ENCODE measurements at regions of chr20 and their contacts with region 1.

Region 1: GRCh38 chr20:51162015-51162414 is 139.1 kb upstream of the KCNG1 start:
- DNase-seq: peak in 1 of 2 experiments; percentile 25
- H3K4me3 ChIP-seq: no peak overlapping the region
- H3K4me3 Mint-ChIP-seq: no peak overlapping the region
- H3K27ac Mint-ChIP-seq: no peak overlapping the region
- H3K4me1 ChIP-seq: peaks cover 4% of the 10 kb centered on the region; the same call in 1 of the 2 replicates
- H3K4me1 Mint-ChIP-seq: no peaks in the 10 kb centered on the region
- H3K27me3 ChIP-seq: peaks cover 3% of the 10 kb centered on the region
- H3K27me3 Mint-ChIP-seq: peaks cover 19% of the 10 kb centered on the region
- CTCF ChIP-seq: no peak

Region 2: DNA sequence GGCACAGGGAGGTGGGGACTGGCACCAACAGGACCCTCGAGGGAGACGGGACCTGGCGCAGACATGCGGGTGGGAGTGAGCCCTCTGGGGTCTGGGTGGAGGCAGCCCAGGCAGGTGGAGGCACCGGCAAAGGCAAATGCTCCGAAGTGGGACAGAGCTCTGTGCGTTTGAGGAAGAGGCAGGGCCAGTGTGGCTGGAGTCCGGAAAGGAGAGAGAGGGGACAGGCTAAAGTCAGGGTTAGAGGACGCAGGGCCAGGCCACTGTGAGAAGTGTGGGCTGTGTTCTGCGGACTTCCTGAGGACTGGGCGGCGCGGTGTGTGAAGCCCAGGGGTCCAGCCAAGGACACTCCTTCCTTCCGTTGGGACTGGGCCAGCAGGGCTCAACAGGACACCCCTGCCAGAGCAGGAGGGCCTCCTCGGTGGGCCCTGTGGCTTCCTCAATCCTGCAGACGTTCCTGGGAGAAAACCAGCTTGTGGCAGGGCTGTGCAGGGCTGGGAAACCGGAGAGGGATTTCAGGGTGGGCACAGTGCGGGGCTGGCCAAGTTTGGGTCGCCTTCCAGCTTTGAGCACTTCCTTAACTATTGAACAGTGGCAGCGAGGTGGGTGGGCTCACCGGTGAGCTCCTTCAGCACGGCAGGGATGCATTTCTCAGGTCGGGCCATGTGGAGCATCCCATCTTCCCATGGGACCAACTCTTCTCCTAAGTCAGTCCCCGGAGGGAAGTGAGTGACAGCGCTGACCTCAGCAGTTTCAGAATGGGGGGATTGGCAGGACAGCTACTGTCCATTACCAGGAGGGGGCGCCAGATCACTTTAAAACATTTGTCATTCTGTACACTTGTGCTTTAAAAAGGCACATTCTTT is 180.9 kb before region 1 on chr20:
- CTCF ChIA-PET with region 1: no interaction called
- POLR2A ChIA-PET with region 1: no interaction called
- intact Hi-C with region 1: no loop called
- DNase-seq: peak; percentile 77 to 85
- H3K4me3 ChIP-seq: no peak overlapping the region
- H3K4me3 Mint-ChIP-seq: no peak overlapping the region
- H3K27ac Mint-ChIP-seq: no peak overlapping the region
- H3K4me1 ChIP-seq: peaks cover 4% of the 10 kb centered on the region
- H3K4me1 Mint-ChIP-seq: peaks cover 10% of the 10 kb centered on the region
- H3K27me3 ChIP-seq: 0 out of 2 replicates have a peak, but pooled peaks cover 1% of the 10 kb centered on the region
- H3K27me3 Mint-ChIP-seq: peaks cover 17% of the 10 kb centered on the region
- CTCF ChIP-seq: peak; percentile 96 to 98

Region 3: DNA sequence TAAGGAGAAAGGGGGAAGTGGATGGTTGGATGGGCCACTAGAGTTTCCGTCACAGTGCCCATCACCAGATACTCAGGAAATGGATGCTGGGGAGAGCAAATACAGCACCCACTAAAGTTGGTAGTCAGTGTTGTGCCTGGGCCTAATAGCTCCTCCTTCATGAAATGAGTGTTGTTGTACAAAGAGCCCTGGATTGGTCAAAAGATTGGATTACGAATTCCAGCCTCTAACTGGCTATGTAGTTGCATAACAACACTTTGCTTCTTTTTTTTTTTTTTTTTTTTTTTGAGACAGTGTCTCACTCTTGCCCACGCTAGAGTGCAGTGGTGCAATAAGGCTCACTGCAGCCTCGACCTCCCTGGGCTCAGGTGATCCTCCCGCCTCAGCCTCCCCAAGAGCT is 166.5 kb before region 1 on chr20:
- CTCF ChIA-PET with region 1: no interaction called
- POLR2A ChIA-PET with region 1: no interaction called
- intact Hi-C with region 1: no loop called
- DNase-seq: no peak
- H3K4me3 ChIP-seq: no peak overlapping the region
- H3K4me3 Mint-ChIP-seq: no peak overlapping the region
- H3K27ac Mint-ChIP-seq: no peak overlapping the region
- H3K4me1 ChIP-seq: no peaks in the 10 kb centered on the region
- H3K4me1 Mint-ChIP-seq: peaks cover 10% of the 10 kb centered on the region
- H3K27me3 ChIP-seq: no peaks in the 10 kb centered on the region
- H3K27me3 Mint-ChIP-seq: peaks cover 20% of the 10 kb centered on the region
- CTCF ChIP-seq: no peak

Region 4: GRCh38 chr20:51059862-51060261 is 102.2 kb before region 1 on chr20:
- CTCF ChIA-PET with region 1: interaction called, 3 read pairs
- POLR2A ChIA-PET with region 1: no interaction called
- intact Hi-C with region 1: loop called (anchors 5 kb)
- DNase-seq: no peak
- H3K4me3 ChIP-seq: no peak overlapping the region
- H3K4me3 Mint-ChIP-seq: no peak overlapping the region
- H3K27ac Mint-ChIP-seq: no peak overlapping the region
- H3K4me1 ChIP-seq: no peaks in the 10 kb centered on the region
- H3K4me1 Mint-ChIP-seq: no peaks in the 10 kb centered on the region
- H3K27me3 ChIP-seq: peaks cover 1% of the 10 kb centered on the region; the same call in 1 of the 2 replicates
- H3K27me3 Mint-ChIP-seq: peaks cover 30% of the 10 kb centered on the region
- CTCF ChIP-seq: no peak

Measured in Caco-2 (cell line).